ENCODE measurements at regions of chr4 and their contacts with region 1.

Region 1: DNA sequence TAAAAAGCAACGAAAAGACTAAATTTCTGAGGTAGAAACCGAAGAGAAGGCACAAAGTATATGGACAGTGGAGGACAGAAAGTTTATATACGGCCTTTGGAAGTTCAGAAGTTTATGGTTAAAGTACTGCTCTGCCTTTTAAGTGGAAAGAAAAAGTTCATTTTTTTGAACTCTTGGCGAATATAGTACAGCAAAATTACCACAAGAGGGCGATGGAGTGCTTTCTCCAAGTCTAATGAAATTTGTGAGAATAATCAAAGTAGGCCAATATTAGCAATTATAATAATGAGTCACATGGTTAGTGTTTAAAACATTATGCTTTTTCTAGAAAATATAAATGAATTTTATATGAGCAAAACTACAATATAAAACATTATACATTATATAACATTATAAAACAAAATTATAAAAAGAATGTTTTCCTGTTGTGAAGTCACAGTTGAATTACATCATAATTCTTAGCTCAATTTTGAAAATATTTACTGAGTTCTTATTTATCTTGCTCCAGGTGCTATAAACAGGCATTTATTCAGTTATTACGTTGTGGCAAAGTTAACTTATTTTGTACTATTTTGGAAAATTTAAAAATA is 136.2 kb upstream of the BMPR1B start:
- DNase-seq: peak; percentile 61
- ATAC-seq: peak; percentile 56
- H3K4me3 ChIP-seq: no peak overlapping the region
- H3K27ac ChIP-seq: no peak overlapping the region
- H3K4me1 ChIP-seq: no peaks in the 10 kb centered on the region
- H3K27me3 ChIP-seq: no peaks in the 10 kb centered on the region
- CTCF ChIP-seq: peak; percentile 93
- POLR2A ChIP-seq: no peak
- RAD21 ChIP-seq: peak; percentile 81

Region 2: GRCh38 chr4:94349193-94349592 is 272.4 kb before region 1 on chr4:
- CTCF ChIA-PET with region 1: no interaction called
- POLR2A ChIA-PET with region 1: no interaction called
- dilution Hi-C with region 1: no loop called
- in situ Hi-C with region 1: no loop called
- intact Hi-C with region 1: no loop called
- DNase-seq: peak; percentile 27
- ATAC-seq: no peak
- H3K4me3 ChIP-seq: no peak overlapping the region
- H3K27ac ChIP-seq: no peak overlapping the region
- H3K4me1 ChIP-seq: no peaks in the 10 kb centered on the region
- H3K27me3 ChIP-seq: peaks cover 10% of the 10 kb centered on the region
- CTCF ChIP-seq: no peak
- POLR2A ChIP-seq: no peak
- RAD21 ChIP-seq: no peak

Region 3: GRCh38 chr4:94595879-94596483 is 25.6 kb before region 1 on chr4:
- CTCF ChIA-PET with region 1: no interaction called
- POLR2A ChIA-PET with region 1: no interaction called
- dilution Hi-C with region 1: no loop called
- in situ Hi-C with region 1: no loop called
- intact Hi-C with region 1: no loop called
- DNase-seq: peak; percentile 74
- ATAC-seq: peak; percentile 79; the same call in 1 of the 2 replicates
- H3K4me3 ChIP-seq: no peak overlapping the region
- H3K27ac ChIP-seq: no peak overlapping the region
- H3K4me1 ChIP-seq: no peaks in the 10 kb centered on the region
- H3K27me3 ChIP-seq: no peaks in the 10 kb centered on the region
- CTCF ChIP-seq: peak; percentile 74
- POLR2A ChIP-seq: no peak
- RAD21 ChIP-seq: peak; percentile 87

Region 4: GRCh38 chr4:94689155-94689860 is 67.7 kb after region 1 on chr4:
- CTCF ChIA-PET with region 1: no interaction called
- POLR2A ChIA-PET with region 1: no interaction called
- dilution Hi-C with region 1: no loop called
- in situ Hi-C with region 1: no loop called
- intact Hi-C with region 1: no loop called
- DNase-seq: no peak
- ATAC-seq: no peak
- H3K4me3 ChIP-seq: no peak overlapping the region
- H3K27ac ChIP-seq: no peak overlapping the region
- H3K4me1 ChIP-seq: 0 out of 2 replicates have a peak, but pooled peaks cover 2% of the 10 kb centered on the region
- H3K27me3 ChIP-seq: no peaks in the 10 kb centered on the region
- CTCF ChIP-seq: no peak
- POLR2A ChIP-seq: no peak
- RAD21 ChIP-seq: no peak

Region 5: DNA sequence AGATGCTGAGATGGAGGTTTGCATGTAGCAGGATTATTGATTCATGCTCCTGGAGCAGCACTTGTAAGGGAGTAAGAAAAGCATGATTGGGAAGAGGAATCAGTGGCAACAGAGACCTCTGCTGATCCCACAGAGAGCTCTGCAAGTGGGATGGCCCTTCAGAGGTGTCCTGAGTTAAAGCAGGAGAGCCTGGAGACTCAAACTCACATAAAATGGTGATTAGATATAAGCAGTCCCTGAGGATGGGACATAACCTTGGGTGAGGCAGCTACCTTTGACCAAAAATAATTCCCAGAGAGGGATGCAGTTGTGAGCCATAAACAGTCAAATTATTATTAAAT is 110.7 kb after region 1 on chr4:
- CTCF ChIA-PET with region 1: interaction called, 5 read pairs
- POLR2A ChIA-PET with region 1: no interaction called
- dilution Hi-C with region 1: no loop called
- in situ Hi-C with region 1: no loop called
- intact Hi-C with region 1: loop called (anchors 1 kb)
- DNase-seq: no peak
- ATAC-seq: no peak
- H3K4me3 ChIP-seq: no peak overlapping the region
- H3K27ac ChIP-seq: no peak overlapping the region
- H3K4me1 ChIP-seq: no peaks in the 10 kb centered on the region
- H3K27me3 ChIP-seq: peaks cover 2% of the 10 kb centered on the region
- CTCF ChIP-seq: no peak
- POLR2A ChIP-seq: no peak
- RAD21 ChIP-seq: no peak

Region 6: GRCh38 chr4:95095348-95095974 is 473.9 kb after region 1 on chr4:
- CTCF ChIA-PET with region 1: interaction called, 6 read pairs
- POLR2A ChIA-PET with region 1: no interaction called
- dilution Hi-C with region 1: loop called (anchors 25 kb)
- in situ Hi-C with region 1: no loop called
- intact Hi-C with region 1: loop called (anchors 1 kb)
- DNase-seq: peak; percentile 59
- ATAC-seq: peak; percentile 82
- H3K4me3 ChIP-seq: no peak overlapping the region
- H3K27ac ChIP-seq: no peak overlapping the region
- H3K4me1 ChIP-seq: no peaks in the 10 kb centered on the region
- H3K27me3 ChIP-seq: no peaks in the 10 kb centered on the region
- CTCF ChIP-seq: peak; percentile 79
- POLR2A ChIP-seq: no peak
- RAD21 ChIP-seq: peak; percentile 84

Region 7: DNA sequence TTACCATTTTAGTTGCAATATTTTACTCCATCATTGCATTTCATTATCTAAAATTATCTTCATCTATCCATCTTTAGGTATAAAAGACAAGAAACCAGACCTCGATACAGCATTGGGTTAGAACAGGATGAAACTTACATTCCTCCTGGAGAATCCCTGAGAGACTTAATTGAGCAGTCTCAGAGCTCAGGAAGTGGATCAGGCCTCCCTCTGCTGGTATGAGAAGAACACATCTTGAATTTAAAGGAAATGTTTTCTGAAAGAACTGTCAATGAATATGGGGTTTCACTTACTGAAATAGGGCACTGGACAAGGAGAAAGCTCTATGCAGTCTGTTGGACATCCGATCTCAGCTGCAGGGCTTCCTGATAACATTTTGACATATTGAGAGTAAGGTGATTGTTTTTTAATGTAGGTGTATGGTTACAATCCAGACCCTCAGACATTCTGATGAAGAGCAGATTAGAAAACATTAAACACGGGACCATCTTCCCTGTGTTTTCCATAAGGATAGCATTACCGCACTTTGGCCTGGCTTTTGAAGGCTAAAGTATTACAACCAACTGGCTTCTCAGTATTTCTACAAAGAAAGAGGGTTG is 503.4 kb after region 1 on chr4:
- CTCF ChIA-PET with region 1: interaction called, 5 read pairs
- POLR2A ChIA-PET with region 1: no interaction called
- dilution Hi-C with region 1: loop called (anchors 25 kb)
- in situ Hi-C with region 1: no loop called
- intact Hi-C with region 1: loop called (anchors 1 kb)
- DNase-seq: peak; percentile 76
- ATAC-seq: peak; percentile 89
- H3K4me3 ChIP-seq: no peak overlapping the region
- H3K27ac ChIP-seq: no peak overlapping the region
- H3K4me1 ChIP-seq: no peaks in the 10 kb centered on the region
- H3K27me3 ChIP-seq: no peaks in the 10 kb centered on the region
- CTCF ChIP-seq: peak; percentile 77
- POLR2A ChIP-seq: no peak
- RAD21 ChIP-seq: peak; percentile 80

Measured in IMR-90 (cell line).